K562 (cell line): ENCODE measurements at regions of chr3 and their contacts with region 1.

Region 1: GRCh38 chr3:136075218-136075808 is 109.8 kb downstream of the PPP2R3A start:
- DNase-seq: peak; percentile 30 to 81 (median 48)
- ATAC-seq: peak; percentile 89
- H3K4me3 ChIP-seq: no peak overlapping the region
- H3K27ac ChIP-seq: no peak overlapping the region
- H3K4me1 ChIP-seq: no peaks in the 10 kb centered on the region
- H3K27me3 ChIP-seq: no peaks in the 10 kb centered on the region
- CTCF ChIP-seq: peak; percentile 66 to 90 (median 75)
- EP300 ChIP-seq: no peak
- POLR2A ChIP-seq: no peak
- RAD21 ChIP-seq: peak; percentile 92 to 95

Region 2: GRCh38 chr3:136196401-136197158 is 121.3 kb after region 1 on chr3:
- CTCF ChIA-PET with region 1: no interaction called
- POLR2A ChIA-PET with region 1: no interaction called
- in situ Hi-C with region 1: no loop called
- intact Hi-C with region 1: loop called (anchors 5 kb)
- DNase-seq: peak; percentile 90 to 97 (median 94)
- ATAC-seq: peak; percentile 78
- H3K4me3 ChIP-seq: peak overlapping the region; percentile 76
- H3K27ac ChIP-seq: peak overlapping the region; percentile 99
- H3K4me1 ChIP-seq: peaks cover 3 to 12% of the 10 kb centered on the region in 2 experiments; a peak in 4 of 5 replicates
- H3K27me3 ChIP-seq: no peaks in the 10 kb centered on the region
- CTCF ChIP-seq: peak in 1 of 3 experiments; percentile 10; a peak in 1 of 6 replicates
- EP300 ChIP-seq: no peak
- POLR2A ChIP-seq: peak; percentile 90
- RAD21 ChIP-seq: no peak

Region 3: GRCh38 chr3:136343446-136344281 is 268.4 kb after region 1 on chr3:
- CTCF ChIA-PET with region 1: no interaction called
- POLR2A ChIA-PET with region 1: no interaction called
- in situ Hi-C with region 1: no loop called
- intact Hi-C with region 1: loop called (anchors 5 kb)
- DNase-seq: peak; percentile 57 to 85 (median 64)
- ATAC-seq: peak; percentile 95
- H3K4me3 ChIP-seq: no peak overlapping the region
- H3K27ac ChIP-seq: peak overlapping the region; percentile 44; the same call in 1 of the 3 replicates
- H3K4me1 ChIP-seq: peaks cover 0 to 10% of the 10 kb centered on the region in 2 experiments; a peak in 3 of 5 replicates
- H3K27me3 ChIP-seq: no peaks in the 10 kb centered on the region
- CTCF ChIP-seq: no peak
- EP300 ChIP-seq: peak; percentile 46; the same call in 1 of the 2 replicates
- POLR2A ChIP-seq: no peak
- RAD21 ChIP-seq: peak in 1 of 2 experiments; percentile 22; a peak in 1 of 4 replicates

Region 4: DNA sequence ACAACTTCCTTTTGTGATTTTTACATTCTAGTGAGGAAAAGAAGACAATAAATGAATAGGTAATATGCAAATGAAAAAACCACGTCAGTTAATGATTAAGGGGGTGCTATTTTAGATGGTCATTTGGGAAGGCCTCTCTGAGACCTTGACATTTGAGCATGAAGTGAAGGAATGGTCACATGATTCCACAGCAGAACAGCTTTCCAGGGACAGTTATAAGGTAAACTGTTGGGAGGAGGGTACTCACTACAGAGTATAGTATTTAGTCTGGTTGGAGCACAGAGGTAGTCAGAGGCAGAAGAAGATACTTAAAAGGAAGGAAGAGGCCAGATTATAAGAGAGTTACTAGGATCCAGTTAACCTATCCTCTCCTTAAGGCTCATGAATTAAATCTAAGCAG is 430.4 kb after region 1 on chr3:
- CTCF ChIA-PET with region 1: interaction called, 3 read pairs
- POLR2A ChIA-PET with region 1: no interaction called
- in situ Hi-C with region 1: no loop called
- intact Hi-C with region 1: loop called (anchors 10 kb)
- DNase-seq: no peak
- ATAC-seq: no peak
- H3K4me3 ChIP-seq: no peak overlapping the region
- H3K27ac ChIP-seq: no peak overlapping the region
- H3K4me1 ChIP-seq: no peaks in the 10 kb centered on the region
- H3K27me3 ChIP-seq: no peaks in the 10 kb centered on the region
- CTCF ChIP-seq: no peak
- EP300 ChIP-seq: no peak
- POLR2A ChIP-seq: no peak
- RAD21 ChIP-seq: no peak

Region 5: DNA sequence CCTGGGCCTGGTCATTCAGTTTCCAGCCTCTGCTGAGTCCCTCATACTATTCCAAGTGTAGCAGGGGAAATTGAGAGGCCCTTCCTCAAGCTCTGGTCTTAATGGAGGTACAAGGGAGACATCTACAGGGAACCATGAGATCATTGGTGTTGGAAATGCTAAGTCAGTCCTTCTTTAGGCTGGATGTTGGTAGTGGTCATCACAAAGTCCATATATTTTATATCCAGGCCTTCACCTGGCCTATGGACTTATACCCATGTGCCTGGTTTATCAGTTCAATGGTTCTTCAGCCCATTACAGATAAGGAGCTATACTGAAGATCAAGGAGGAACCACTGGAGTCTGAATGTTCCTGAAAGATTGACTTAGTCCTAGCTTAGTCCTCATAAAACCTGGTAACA is 541.9 kb after region 1 on chr3:
- CTCF ChIA-PET with region 1: no interaction called
- POLR2A ChIA-PET with region 1: no interaction called
- in situ Hi-C with region 1: no loop called
- intact Hi-C with region 1: loop called (anchors 1 kb)
- DNase-seq: peak in 2 of 4 experiments; percentile 35 to 50
- ATAC-seq: peak; percentile 92
- H3K4me3 ChIP-seq: no peak overlapping the region
- H3K27ac ChIP-seq: peak overlapping the region; percentile 63
- H3K4me1 ChIP-seq: peaks cover 3 to 12% of the 10 kb centered on the region in 2 experiments; a peak in 3 of 5 replicates
- H3K27me3 ChIP-seq: no peaks in the 10 kb centered on the region
- CTCF ChIP-seq: peak in 2 of 3 experiments; percentile 23 to 40; a peak in 2 of 6 replicates
- EP300 ChIP-seq: no peak
- POLR2A ChIP-seq: no peak
- RAD21 ChIP-seq: peak; percentile 14 to 68; a peak in 2 of 4 replicates

Region 6: DNA sequence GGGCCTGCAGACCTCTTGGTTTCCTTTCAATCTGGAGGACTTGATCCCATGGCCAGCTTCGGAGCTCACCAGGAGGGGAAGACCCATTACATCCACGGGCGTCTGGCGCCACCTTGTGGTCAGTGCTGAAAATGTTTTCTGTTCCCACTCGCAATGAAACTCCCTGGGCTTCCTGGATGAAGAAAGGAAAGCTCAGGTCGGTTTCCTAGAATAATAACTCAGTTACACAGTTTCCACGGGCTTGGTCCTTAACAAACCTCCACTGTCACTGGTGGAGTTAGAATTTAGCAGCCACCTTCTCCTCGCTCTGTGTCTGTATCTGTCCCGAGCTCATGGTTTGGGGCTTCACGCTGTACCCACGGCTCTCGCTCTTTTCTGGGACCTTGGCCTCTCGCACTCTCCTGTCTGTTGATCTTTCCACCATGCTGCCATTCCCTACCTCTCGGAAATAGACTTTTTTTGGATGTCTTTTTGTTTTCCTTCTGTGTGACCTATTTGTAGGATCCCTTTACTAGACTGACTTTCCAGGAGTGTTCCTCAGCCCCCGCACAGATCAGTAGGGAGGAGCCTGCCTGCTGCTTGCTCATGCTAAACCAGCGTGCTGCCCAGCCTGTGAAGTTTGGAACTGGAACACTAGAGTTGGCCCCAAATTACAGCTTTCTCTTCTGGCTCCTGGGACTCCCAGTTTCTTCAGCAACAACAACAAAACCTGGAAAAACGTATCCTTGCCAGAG is 938.8 kb after region 1 on chr3:
- CTCF ChIA-PET with region 1: interaction called, 8 read pairs
- POLR2A ChIA-PET with region 1: no interaction called
- in situ Hi-C with region 1: loop called (anchors 5 kb)
- intact Hi-C with region 1: loop called (anchors 1 kb)
- DNase-seq: peak; percentile 77 to 88 (median 80)
- ATAC-seq: peak; percentile 93
- H3K4me3 ChIP-seq: peak overlapping the region; percentile 36
- H3K27ac ChIP-seq: peak overlapping the region; percentile 82
- H3K4me1 ChIP-seq: peaks cover 4 to 7% of the 10 kb centered on the region in 2 experiments; a peak in 3 of 5 replicates
- H3K27me3 ChIP-seq: no peaks in the 10 kb centered on the region
- CTCF ChIP-seq: peak; percentile 79 to 87 (median 81)
- EP300 ChIP-seq: no peak
- POLR2A ChIP-seq: peak; percentile 46; the same call in 1 of the 2 replicates
- RAD21 ChIP-seq: peak; percentile 83 to 88

Region 7: DNA sequence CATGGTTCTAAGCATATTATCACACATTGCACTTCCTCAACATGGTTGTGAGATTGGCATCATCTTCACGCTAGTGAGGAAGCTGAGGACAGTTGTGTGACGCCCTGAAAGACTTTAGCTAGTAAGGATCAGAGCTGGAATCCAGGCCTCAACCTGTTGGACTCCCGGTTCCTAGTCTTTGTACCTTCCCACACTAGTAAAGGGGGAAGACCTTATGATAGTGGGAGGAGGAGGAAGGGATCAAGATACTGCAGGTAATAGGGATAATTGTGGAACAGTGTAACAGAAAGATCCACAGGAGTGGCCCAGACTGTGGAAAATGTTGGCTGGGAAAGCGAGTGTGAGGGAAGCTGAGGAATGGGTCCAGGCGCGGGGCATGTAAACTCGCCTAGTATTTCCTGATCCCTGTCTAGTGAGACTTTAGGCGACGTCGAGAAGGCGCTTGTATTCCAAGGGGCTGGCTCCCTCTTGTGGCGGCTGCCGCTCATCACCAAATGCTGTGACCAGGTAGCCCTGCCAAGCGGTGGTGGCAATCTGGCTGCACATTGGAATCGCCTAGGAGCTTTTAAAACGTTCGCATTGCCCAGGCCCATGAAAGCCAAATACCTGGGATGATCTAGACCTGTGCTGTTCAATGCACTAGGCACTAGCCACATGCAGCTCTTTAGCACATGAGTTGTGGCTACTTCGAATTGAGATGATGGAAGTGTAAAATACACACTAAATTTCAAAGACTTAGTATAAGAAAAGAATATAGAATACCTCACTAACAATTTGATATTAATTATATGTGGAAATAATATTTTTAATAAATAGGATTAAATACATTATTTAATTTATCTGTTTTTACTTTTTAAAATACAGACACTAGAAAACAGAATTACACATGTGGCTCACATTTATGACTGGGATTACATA is 1895.9 kb after region 1 on chr3:
- CTCF ChIA-PET with region 1: no interaction called
- POLR2A ChIA-PET with region 1: no interaction called
- in situ Hi-C with region 1: loop called (anchors 25 kb)
- intact Hi-C with region 1: no loop called
- DNase-seq: peak; percentile 42 to 58 (median 52)
- ATAC-seq: peak; percentile 97
- H3K4me3 ChIP-seq: no peak overlapping the region
- H3K27ac ChIP-seq: no peak overlapping the region
- H3K4me1 ChIP-seq: no peaks in the 10 kb centered on the region
- H3K27me3 ChIP-seq: no peaks in the 10 kb centered on the region
- CTCF ChIP-seq: peak; percentile 66 to 82 (median 73)
- EP300 ChIP-seq: no peak
- POLR2A ChIP-seq: no peak
- RAD21 ChIP-seq: peak; percentile 43 to 70; a peak in 3 of 4 replicates